ENCODE measurements at regions of chr2 and their contacts with region 1.

Region 1: DNA sequence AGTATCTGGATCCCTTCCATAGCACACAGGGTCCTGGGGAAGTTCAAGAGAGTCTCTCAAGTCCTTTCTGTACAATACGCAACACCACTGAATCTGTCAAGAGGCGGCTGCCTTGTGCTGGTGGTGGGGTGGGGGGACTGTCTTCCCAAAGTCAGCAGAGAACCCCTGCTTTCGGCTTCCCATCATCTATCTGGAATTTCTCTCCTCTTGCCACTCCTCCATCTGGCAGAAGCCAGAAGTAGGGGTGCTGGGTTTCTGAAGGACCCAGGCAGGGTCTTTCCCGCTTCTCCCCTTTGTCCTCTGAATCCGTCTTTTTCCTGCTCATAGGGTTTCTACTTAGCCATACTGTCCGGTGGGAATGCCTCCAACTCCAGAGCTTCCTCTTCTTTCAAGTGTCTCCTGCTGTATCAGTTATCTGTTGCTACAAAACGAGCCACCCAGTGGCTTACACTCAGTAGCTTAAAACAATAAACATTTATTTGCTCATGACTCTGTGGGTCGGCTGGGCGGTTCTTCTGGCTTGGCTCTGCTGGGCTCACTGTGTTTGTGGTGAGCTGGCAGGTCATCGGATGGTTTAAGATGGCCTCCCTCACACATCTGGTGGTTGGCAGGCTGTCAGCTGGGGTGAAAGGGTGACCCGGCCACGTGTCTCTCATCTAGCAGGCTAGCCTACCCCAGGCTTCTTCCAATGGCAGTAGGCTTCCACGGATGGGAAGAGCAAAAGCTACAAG is 122.6 kb upstream of the SLC1A4 start:
- DNase-seq: peak; percentile 79
- H3K4me3 ChIP-seq: no peak overlapping the region
- H3K27me3 ChIP-seq: peaks cover 39% of the 10 kb centered on the region
- CTCF ChIP-seq: peak; percentile 21; the same call in 1 of the 2 replicates

Region 2: GRCh38 chr2:63841254-63842022 is 1025.2 kb before region 1 on chr2 and contains the start of gene UGP2:
- CTCF ChIA-PET with region 1: no interaction called
- POLR2A ChIA-PET with region 1: interaction called, 14 read pairs
- DNase-seq: peak; percentile 84
- H3K4me3 ChIP-seq: peak within 1 kb of the TSS; percentile 61
- H3K27me3 ChIP-seq: no peaks in the 10 kb centered on the region
- CTCF ChIP-seq: peak; percentile 35; the same call in 1 of the 2 replicates
- polyA plus RNA-seq, gene UGP2: 53.6 and 139 TPM in 2 replicates

Region 3: GRCh38 chr2:64523666-64524603 is 342.7 kb before region 1 on chr2 and contains the start of gene AFTPH:
- CTCF ChIA-PET with region 1: interaction called, 12 read pairs
- POLR2A ChIA-PET with region 1: no interaction called
- DNase-seq: peak; percentile 93
- H3K4me3 ChIP-seq: peak within 1 kb of the TSS; percentile 73
- H3K27me3 ChIP-seq: peaks cover 6% of the 10 kb centered on the region
- CTCF ChIP-seq: no peak
- polyA plus RNA-seq, gene AFTPH: 10.9 and 21.7 TPM in 2 replicates

Region 4: GRCh38 chr2:64586883-64587481 is 279.6 kb before region 1 on chr2:
- CTCF ChIA-PET with region 1: interaction called, 19 read pairs
- POLR2A ChIA-PET with region 1: no interaction called
- DNase-seq: no peak
- H3K4me3 ChIP-seq: no peak overlapping the region
- H3K27me3 ChIP-seq: no peaks in the 10 kb centered on the region
- CTCF ChIP-seq: peak; percentile 64

Region 5: GRCh38 chr2:64595397-64596160 is 271.1 kb before region 1 on chr2:
- CTCF ChIA-PET with region 1: interaction called, 14 read pairs
- POLR2A ChIA-PET with region 1: no interaction called
- DNase-seq: no peak
- H3K4me3 ChIP-seq: no peak overlapping the region
- H3K27me3 ChIP-seq: peaks cover 19% of the 10 kb centered on the region
- CTCF ChIP-seq: no peak; the same call in 1 of the 2 replicates

Region 6: GRCh38 chr2:64644177-64645004 is 222.2 kb before region 1 on chr2:
- CTCF ChIA-PET with region 1: interaction called, 34 read pairs
- POLR2A ChIA-PET with region 1: no interaction called
- DNase-seq: peak; percentile 30
- H3K4me3 ChIP-seq: peak overlapping the region; percentile 47
- H3K27me3 ChIP-seq: no peaks in the 10 kb centered on the region
- CTCF ChIP-seq: no peak

Region 7: DNA sequence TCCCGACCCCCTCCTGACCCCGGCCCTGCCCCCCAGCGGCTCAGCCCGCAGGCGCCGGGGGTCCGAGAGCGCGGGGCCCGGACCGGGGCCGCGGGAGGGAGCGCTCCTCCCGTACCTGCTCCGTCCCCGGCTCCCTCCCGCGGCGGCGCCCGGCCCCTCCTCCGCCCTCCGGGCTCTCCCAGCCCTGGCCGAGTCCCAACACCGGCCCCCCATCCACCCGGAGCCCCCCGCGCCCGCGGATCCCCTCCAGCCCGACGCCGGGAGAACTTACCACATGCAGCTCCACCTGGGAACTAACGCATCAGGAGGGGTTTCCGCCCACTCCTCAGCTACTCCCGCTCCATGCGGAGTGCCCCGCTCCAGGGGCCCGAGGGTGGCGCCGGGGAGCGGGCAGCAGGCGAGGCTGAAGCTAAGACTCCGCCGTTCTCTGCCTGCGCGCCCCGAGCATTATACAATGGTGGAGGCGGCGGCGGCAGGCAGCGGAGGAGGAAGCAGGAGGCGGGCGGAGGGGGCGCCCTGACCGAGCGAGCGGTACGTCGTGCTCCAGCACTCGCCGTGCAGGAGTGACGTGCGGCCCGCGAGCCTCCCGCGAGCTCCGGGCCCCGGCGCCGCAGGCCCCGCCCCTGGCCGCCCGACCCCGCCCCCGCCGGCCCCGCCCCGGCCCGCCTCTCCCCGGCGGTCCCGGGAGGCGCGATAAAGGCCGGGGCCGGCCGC is 213.1 kb before region 1 on chr2 and contains the start of gene SERTAD2:
- CTCF ChIA-PET with region 1: interaction called, 11 read pairs
- POLR2A ChIA-PET with region 1: interaction called, 4 read pairs
- DNase-seq: no peak
- H3K4me3 ChIP-seq: peak within 1 kb of the TSS; percentile 81
- H3K27me3 ChIP-seq: no peaks in the 10 kb centered on the region
- CTCF ChIP-seq: no peak; the same call in 1 of the 2 replicates
- polyA plus RNA-seq, gene SERTAD2: 6.2 and 8.7 TPM in 2 replicates